ENCODE measurements at regions of chr9 and their contacts with region 1.

Region 1: GRCh38 chr9:68584189-68585033 is 43.7 kb upstream of the TMEM252 start:
- DNase-seq: peak; percentile 85 to 91 (median 88)
- ATAC-seq: peak; percentile 95 to 97
- H3K4me3 ChIP-seq: no peak overlapping the region
- H3K27ac ChIP-seq: no peak overlapping the region
- H3K4me1 ChIP-seq: no peaks in the 10 kb centered on the region
- H3K27me3 ChIP-seq: no peaks in the 10 kb centered on the region

Region 2: GRCh38 chr9:69030851-69031645 is 446.6 kb after region 1 on chr9:
- intact Hi-C with region 1: loop called in 1 of 4 experiments (anchors 5 kb)
- DNase-seq: no peak
- ATAC-seq: no peak
- H3K4me3 ChIP-seq: no peak overlapping the region
- H3K27ac ChIP-seq: no peak overlapping the region
- H3K4me1 ChIP-seq: peaks cover 3% of the 10 kb centered on the region
- H3K27me3 ChIP-seq: no peaks in the 10 kb centered on the region

Measured in right cardiac atrium (tissue), 5 donors.